SK-N-SH (cell line): ENCODE measurements at regions of chr11 and their contacts with region 1.

Region 1: DNA sequence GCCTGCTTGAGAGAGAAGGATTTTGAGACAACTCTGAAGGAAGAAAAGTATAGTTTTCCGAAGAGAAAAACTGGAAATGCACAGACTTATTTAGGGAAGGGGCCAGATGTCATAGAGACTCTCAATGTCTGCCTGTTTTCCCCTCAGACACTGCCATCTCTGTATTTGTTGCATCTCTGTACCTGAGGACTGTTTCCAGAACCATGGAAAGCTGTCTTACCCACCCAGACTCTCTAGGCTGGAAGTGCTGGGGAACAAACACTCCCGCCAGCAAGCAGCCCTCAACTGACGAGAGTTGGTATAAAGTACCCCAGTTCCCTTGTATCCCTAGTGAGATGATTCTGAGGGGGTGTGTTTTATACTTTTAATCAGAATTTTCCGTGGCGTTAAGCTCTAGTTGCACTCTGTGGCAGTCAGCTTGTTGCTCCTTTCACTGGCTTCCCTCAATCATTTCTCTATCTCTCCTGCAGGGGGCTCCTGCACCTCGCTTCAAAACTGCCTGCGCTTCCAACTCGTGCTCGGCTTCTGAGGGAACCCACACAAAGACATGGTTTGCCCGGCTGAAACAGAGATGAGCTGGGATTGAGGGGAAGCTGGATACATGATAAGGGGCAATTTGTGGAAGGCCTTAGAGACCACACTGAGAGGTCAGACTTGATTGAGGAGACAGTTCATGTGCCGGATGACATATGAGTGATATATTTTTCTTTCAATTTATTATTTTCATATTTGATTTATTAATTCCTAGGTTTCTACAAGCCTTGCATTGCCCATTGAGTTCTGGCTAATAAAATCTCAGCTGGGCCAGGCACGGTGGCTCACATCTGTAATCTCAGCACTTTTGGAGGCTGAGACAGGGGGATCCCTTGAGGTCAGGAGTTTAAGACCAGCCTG is 36.9 kb upstream of the CLPB start:
- DNase-seq: peak; percentile 76
- H3K4me3 ChIP-seq: peak overlapping the region in 1 of 2 experiments; percentile 17; a peak in 1 of 4 replicates
- H3K27ac ChIP-seq: no peak overlapping the region
- H3K4me1 ChIP-seq: no peaks in the 10 kb centered on the region; a peak in 1 of 4 replicates
- H3K27me3 ChIP-seq: peaks cover 14% of the 10 kb centered on the region
- CTCF ChIP-seq: peak; percentile 81
- EP300 ChIP-seq: no peak
- RAD21 ChIP-seq: peak; percentile 87

Region 2: GRCh38 chr11:72278911-72279310 is 192.3 kb before region 1 on chr11:
- CTCF ChIA-PET with region 1: no interaction called
- POLR2A ChIA-PET with region 1: no interaction called
- DNase-seq: no peak
- H3K4me3 ChIP-seq: no peak overlapping the region
- H3K27ac ChIP-seq: peak overlapping the region in 1 of 2 experiments; percentile 55; a peak in 2 of 4 replicates
- H3K4me1 ChIP-seq: peaks cover 0 to 9% of the 10 kb centered on the region in 2 experiments; a peak in 1 of 4 replicates
- H3K27me3 ChIP-seq: no peaks in the 10 kb centered on the region
- CTCF ChIP-seq: no peak
- EP300 ChIP-seq: no peak
- RAD21 ChIP-seq: no peak

Region 3: DNA sequence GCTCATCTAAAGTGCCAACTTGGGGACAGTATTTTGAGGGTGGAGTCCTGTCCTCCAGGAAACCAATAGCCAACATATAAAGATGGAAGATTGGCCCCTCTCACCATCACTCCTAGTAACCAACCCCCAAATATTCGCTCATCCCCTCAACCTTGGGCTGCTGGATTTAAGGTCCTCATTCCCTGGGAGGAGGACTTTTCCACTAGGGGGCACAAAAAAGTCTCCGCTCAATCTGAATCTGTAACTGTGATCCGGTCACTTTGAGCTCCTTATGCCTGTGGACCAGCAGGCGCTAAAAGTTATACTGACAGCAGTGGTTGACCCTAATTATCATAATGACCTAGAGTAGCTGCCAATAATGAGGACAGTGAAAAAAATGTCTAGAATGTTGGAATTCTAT is 16.5 kb before region 1 on chr11:
- CTCF ChIA-PET with region 1: interaction called, 37 read pairs
- POLR2A ChIA-PET with region 1: interaction called, 3 read pairs
- DNase-seq: no peak
- H3K4me3 ChIP-seq: no peak overlapping the region
- H3K27ac ChIP-seq: no peak overlapping the region
- H3K4me1 ChIP-seq: no peaks in the 10 kb centered on the region
- H3K27me3 ChIP-seq: peaks cover 6% of the 10 kb centered on the region; the same call in 1 of the 2 replicates
- CTCF ChIP-seq: peak; percentile 19; the same call in 1 of the 2 replicates
- EP300 ChIP-seq: no peak
- RAD21 ChIP-seq: no peak

Region 4: DNA sequence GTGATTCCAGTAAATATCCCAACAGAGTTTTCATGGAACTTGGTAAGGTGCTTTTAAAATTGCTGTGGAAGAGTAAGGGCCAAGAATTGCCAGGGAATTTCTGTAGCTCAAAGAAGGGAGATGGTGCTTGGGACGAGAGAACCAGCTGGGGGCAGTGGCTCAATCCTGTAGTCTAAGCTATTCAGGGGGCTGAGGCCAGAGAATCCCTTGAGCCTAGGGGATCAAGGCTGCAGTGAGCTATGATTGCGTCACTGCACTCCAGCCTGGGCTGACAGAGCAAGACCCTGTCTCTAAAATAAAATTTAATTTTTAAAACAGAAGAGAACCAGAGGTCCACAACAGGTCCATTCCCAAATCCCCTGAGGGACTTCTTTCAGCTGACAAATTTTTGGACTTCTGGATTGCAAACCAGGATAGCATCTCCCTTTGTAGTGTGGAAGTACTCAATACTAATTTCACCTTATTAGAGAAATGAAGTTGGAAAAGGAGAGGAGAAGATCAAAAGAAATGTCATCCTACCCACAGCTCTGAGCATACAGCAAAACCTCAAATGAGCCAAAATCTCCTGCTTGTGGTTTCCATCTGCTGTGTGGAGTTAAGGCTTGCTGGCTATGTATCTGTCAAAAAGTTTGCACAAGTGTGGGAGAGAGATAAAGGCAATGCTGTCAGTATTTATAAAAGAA is 22.3 kb after region 1 on chr11:
- CTCF ChIA-PET with region 1: interaction called, 14 read pairs
- POLR2A ChIA-PET with region 1: no interaction called
- DNase-seq: no peak
- H3K4me3 ChIP-seq: no peak overlapping the region
- H3K27ac ChIP-seq: no peak overlapping the region
- H3K4me1 ChIP-seq: no peaks in the 10 kb centered on the region; a peak in 1 of 4 replicates
- H3K27me3 ChIP-seq: peaks cover 5% of the 10 kb centered on the region; the same call in 1 of the 2 replicates
- CTCF ChIP-seq: no peak
- EP300 ChIP-seq: no peak
- RAD21 ChIP-seq: no peak

Region 5: DNA sequence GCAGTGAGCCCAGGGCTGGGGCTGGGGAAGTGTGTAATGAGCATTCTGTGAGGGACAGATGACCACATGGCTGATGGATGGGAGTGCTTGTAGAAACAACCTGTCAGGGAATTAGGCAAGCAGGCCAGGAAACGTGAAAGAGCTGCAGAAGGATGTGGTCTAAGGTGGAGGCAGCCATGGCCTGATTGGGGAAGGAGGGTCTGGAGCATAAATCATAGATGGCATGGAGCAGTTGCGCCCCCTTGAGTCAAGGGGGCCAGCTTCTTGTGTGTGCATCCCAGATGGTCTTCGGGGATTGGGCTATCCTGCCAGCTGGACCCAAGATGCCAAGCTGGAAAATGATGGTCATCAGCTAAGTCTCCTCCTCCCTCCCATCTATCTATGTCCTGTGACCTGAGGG is 82.5 kb after region 1 on chr11:
- CTCF ChIA-PET with region 1: interaction called, 27 read pairs
- POLR2A ChIA-PET with region 1: no interaction called
- DNase-seq: no peak
- H3K4me3 ChIP-seq: no peak overlapping the region
- H3K27ac ChIP-seq: peak overlapping the region in 1 of 2 experiments; percentile 25; a peak in 1 of 4 replicates
- H3K4me1 ChIP-seq: peaks cover 0 to 13% of the 10 kb centered on the region in 2 experiments; a peak in 1 of 4 replicates
- H3K27me3 ChIP-seq: peaks cover 15% of the 10 kb centered on the region
- CTCF ChIP-seq: no peak
- EP300 ChIP-seq: no peak
- RAD21 ChIP-seq: peak; percentile 53

Region 6: GRCh38 chr11:72585762-72586311 is 114.6 kb after region 1 on chr11:
- CTCF ChIA-PET with region 1: interaction called, 29 read pairs
- POLR2A ChIA-PET with region 1: no interaction called
- DNase-seq: peak; percentile 89
- H3K4me3 ChIP-seq: no peak overlapping the region
- H3K27ac ChIP-seq: no peak overlapping the region
- H3K4me1 ChIP-seq: no peaks in the 10 kb centered on the region; a peak in 1 of 4 replicates
- H3K27me3 ChIP-seq: peaks cover 20% of the 10 kb centered on the region
- CTCF ChIP-seq: peak; percentile 90
- EP300 ChIP-seq: no peak
- RAD21 ChIP-seq: peak; percentile 87